Caco-2 (cell line): ENCODE measurements at regions of chr15 and their contacts with region 1.

Region 1: GRCh38 chr15:40906091-40906990 is 12.1 kb downstream of the VPS18 start:
- DNase-seq: peak; percentile 88 to 92
- H3K4me3 ChIP-seq: peak overlapping the region; percentile 16; the same call in 1 of the 2 replicates
- H3K4me3 Mint-ChIP-seq: no peak overlapping the region
- H3K27ac Mint-ChIP-seq: peak overlapping the region; percentile 35
- H3K4me1 ChIP-seq: peaks cover 28% of the 10 kb centered on the region
- H3K4me1 Mint-ChIP-seq: peaks cover 12% of the 10 kb centered on the region
- H3K27me3 ChIP-seq: no peaks in the 10 kb centered on the region
- H3K27me3 Mint-ChIP-seq: no peaks in the 10 kb centered on the region
- CTCF ChIP-seq: peak; percentile 86 to 89

Region 2: DNA sequence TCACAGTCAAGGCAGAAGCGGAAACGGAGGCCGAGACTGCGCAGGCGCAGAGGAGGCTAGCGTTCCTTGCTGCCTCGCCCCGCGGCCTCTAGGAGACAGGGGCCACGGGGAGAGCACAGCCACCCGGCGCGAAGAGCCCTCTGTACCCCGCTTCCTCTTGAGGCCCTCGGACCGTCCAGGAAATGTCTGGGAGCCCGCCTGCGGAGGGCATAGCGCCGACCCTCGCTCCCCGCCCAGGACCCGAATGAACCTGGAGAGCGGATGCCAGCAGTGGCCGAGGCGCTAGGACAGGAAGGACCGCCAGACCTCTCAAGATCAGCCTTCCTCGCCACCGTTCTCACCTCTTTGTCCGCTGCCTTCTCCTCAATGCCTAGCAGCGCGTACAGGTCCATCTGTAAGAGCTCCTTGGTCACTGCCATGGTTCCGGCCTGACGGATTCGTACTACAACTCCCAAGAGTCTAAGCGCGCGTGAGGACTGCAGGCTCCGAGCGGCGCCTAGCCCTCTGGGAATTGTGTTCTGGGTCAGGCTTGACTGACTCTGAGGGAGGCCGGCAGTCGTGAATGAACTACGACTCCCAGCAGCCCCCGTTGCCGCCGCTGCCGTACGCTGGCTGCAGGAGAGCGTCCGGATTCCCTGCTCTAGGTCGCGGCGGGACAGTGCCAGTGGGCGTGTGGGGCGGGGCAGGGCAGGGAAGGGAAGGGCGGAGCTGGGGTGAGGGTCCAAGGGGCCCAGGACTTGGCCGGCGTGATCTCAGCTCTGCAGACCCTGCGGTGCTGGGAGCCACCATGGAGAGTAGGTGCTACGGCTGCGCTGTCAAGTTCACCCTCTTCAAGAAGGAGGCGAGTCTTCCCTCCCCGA is 99.1 kb before region 1 on chr15 and contains the starts of genes DNAJC17 and ZFYVE19:
- CTCF ChIA-PET with region 1: no interaction called
- POLR2A ChIA-PET with region 1: no interaction called
- intact Hi-C with region 1: no loop called
- DNase-seq: peak; percentile 96 to 97
- H3K4me3 ChIP-seq: peak within 1 kb of the TSS; percentile 88
- H3K4me3 Mint-ChIP-seq: peak within 1 kb of the TSS; percentile 95
- H3K27ac Mint-ChIP-seq: peak within 1 kb of the TSS; percentile 94
- H3K4me1 ChIP-seq: 0 out of 2 replicates have a peak, but pooled peaks cover 4% of the 10 kb centered on the region
- H3K4me1 Mint-ChIP-seq: no peaks in the 10 kb centered on the region
- H3K27me3 ChIP-seq: no peaks in the 10 kb centered on the region
- H3K27me3 Mint-ChIP-seq: no peaks in the 10 kb centered on the region
- CTCF ChIP-seq: no peak
- total RNA-seq, gene DNAJC17: 26.3 and 30.1 TPM in 2 replicates
- total RNA-seq, gene ZFYVE19: 26.7 and 26.9 TPM in 2 replicates

Region 3: DNA sequence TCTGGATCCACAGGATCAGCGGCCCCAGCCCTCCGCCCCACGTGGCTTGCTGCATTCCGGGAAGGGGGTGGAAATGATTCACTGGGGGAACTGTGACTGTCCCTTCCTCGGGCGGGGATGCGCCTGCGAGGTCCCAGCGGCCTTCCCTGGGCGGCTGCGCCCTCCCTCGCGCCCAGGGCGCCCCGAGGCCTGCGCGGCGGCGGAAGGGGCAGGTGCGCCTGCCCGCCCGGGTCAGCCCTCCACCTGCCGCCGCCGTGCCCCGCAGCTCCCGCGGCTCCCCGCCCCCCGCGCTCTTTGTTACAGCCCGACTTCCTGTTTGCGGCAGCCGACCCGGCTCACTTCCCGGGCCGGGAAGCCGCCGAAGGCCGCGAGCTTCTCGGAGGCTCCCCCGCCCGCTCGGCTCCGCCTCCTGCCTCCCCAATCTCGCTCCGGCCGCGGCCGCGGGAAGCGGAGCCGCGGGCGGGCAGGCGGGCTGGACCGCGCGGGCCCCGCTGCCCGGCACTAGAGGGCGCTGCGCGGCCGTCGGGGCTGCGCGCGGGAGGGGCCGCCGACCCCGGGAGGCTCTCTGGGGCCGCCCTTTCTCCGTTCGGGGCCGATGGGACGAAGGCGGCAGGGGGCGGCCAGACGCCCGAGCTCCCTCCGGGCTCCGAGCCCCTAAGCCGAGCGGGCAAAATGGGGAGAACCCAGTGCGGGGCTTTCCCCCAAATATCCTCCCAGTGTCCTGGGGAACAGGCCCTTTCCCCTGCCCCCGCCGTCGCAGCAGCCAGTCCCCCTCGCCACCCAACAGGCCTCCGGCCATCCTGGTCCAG is 35.4 kb after region 1 on chr15:
- CTCF ChIA-PET with region 1: interaction called, 12 read pairs
- POLR2A ChIA-PET with region 1: interaction called, 3 read pairs
- intact Hi-C with region 1: loop called (anchors 5 kb)
- DNase-seq: peak; percentile 86 to 90
- H3K4me3 ChIP-seq: peak overlapping the region; percentile 56
- H3K4me3 Mint-ChIP-seq: peak overlapping the region; percentile 79
- H3K27ac Mint-ChIP-seq: peak overlapping the region; percentile 95
- H3K4me1 ChIP-seq: peaks cover 12% of the 10 kb centered on the region
- H3K4me1 Mint-ChIP-seq: no peaks in the 10 kb centered on the region
- H3K27me3 ChIP-seq: no peaks in the 10 kb centered on the region
- H3K27me3 Mint-ChIP-seq: no peaks in the 10 kb centered on the region
- CTCF ChIP-seq: peak; percentile 16 to 60

Region 4: DNA sequence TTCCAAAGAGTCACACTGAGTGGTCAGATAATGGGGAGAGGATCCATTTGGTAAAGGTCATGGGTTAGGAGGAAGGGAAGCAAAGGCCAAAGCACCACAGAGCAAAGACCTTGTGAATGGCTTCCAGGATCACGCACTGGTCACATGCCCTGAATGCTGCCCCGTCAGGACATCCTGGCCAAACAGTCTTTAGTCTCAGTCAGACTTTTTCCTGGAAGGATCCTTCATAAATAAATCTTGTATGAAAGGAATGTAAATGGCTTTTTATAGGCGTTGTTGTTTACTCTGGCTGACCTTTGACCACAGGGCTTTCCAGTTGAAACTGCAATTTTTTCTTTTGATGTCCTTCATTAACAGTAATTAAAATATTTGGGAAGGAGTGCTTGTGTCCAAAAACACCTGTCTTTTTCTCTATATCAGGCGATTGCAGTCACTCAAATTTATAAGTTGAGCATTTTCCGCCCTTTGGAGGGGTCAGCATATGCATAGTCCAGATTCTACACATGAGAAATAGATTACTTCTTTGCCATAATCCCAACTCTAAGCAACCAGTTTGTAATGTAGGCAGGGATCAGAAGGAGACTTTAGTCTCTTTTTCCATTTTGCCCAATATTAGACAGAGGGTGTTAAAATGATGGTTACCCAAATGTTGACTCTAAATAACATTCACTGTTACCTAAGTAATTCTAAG is 95.3 kb after region 1 on chr15:
- CTCF ChIA-PET with region 1: no interaction called
- POLR2A ChIA-PET with region 1: no interaction called
- intact Hi-C with region 1: no loop called
- DNase-seq: peak; percentile 58 to 67
- H3K4me3 ChIP-seq: no peak overlapping the region
- H3K4me3 Mint-ChIP-seq: no peak overlapping the region
- H3K27ac Mint-ChIP-seq: peak overlapping the region; percentile 3
- H3K4me1 ChIP-seq: peaks cover 25% of the 10 kb centered on the region
- H3K4me1 Mint-ChIP-seq: no peaks in the 10 kb centered on the region
- H3K27me3 ChIP-seq: no peaks in the 10 kb centered on the region
- H3K27me3 Mint-ChIP-seq: no peaks in the 10 kb centered on the region
- CTCF ChIP-seq: no peak

Region 5: DNA sequence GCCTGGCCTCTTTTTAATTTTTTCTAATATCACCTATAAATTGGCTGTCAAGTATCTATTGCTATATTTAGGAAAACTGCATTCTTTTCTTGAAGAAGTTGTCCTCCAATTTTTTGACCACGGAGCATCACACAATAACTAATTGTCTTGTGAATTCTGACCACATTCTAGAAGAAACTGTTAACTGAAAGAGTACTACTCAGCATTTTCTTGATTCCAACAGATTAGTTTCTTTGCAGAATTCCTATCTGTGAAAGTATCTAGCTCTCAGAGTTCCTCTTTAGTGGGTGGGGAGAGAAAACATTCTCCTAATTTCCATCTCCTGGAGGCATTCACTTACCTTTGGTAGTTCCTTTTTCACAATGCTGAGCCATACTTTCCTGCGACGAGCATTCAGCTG is 178.7 kb after region 1 on chr15:
- CTCF ChIA-PET with region 1: no interaction called
- POLR2A ChIA-PET with region 1: no interaction called
- intact Hi-C with region 1: no loop called
- DNase-seq: no peak
- H3K4me3 ChIP-seq: no peak overlapping the region
- H3K4me3 Mint-ChIP-seq: no peak overlapping the region
- H3K27ac Mint-ChIP-seq: no peak overlapping the region
- H3K4me1 ChIP-seq: no peaks in the 10 kb centered on the region
- H3K4me1 Mint-ChIP-seq: no peaks in the 10 kb centered on the region
- H3K27me3 ChIP-seq: no peaks in the 10 kb centered on the region
- H3K27me3 Mint-ChIP-seq: no peaks in the 10 kb centered on the region
- CTCF ChIP-seq: no peak

Region 6: DNA sequence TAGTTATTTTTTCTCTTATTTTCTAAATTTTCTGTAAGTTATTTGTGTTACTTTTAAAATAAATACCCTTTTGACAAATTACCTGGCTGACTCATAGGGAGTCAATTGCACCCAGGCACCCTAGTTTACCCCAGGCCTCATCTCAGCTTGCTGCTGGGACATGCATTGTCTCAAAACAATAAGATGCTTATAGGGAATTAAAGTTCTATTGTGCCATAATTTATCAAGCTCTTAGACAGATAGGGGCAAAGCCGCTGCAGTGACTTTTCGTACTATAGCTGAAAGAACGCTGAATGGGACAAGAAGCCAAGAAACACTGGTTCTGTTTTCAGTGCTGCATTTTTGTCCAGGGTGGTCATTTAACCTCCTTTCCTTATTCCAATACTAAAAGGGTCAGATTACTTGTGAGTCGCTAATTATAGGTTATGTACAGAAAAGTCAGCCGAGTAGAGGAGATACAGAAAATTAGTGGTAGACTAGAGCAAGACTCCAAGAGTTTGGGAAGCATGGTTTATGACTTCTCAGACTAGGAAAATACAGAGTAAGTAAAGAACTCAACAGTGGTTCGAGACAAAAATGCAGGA is 274.0 kb after region 1 on chr15:
- CTCF ChIA-PET with region 1: interaction called, 5 read pairs
- POLR2A ChIA-PET with region 1: no interaction called
- intact Hi-C with region 1: loop called (anchors 1 kb)
- DNase-seq: no peak
- H3K4me3 ChIP-seq: no peak overlapping the region
- H3K4me3 Mint-ChIP-seq: no peak overlapping the region
- H3K27ac Mint-ChIP-seq: no peak overlapping the region
- H3K4me1 ChIP-seq: no peaks in the 10 kb centered on the region
- H3K4me1 Mint-ChIP-seq: no peaks in the 10 kb centered on the region
- H3K27me3 ChIP-seq: no peaks in the 10 kb centered on the region
- H3K27me3 Mint-ChIP-seq: no peaks in the 10 kb centered on the region
- CTCF ChIP-seq: no peak

Region 7: DNA sequence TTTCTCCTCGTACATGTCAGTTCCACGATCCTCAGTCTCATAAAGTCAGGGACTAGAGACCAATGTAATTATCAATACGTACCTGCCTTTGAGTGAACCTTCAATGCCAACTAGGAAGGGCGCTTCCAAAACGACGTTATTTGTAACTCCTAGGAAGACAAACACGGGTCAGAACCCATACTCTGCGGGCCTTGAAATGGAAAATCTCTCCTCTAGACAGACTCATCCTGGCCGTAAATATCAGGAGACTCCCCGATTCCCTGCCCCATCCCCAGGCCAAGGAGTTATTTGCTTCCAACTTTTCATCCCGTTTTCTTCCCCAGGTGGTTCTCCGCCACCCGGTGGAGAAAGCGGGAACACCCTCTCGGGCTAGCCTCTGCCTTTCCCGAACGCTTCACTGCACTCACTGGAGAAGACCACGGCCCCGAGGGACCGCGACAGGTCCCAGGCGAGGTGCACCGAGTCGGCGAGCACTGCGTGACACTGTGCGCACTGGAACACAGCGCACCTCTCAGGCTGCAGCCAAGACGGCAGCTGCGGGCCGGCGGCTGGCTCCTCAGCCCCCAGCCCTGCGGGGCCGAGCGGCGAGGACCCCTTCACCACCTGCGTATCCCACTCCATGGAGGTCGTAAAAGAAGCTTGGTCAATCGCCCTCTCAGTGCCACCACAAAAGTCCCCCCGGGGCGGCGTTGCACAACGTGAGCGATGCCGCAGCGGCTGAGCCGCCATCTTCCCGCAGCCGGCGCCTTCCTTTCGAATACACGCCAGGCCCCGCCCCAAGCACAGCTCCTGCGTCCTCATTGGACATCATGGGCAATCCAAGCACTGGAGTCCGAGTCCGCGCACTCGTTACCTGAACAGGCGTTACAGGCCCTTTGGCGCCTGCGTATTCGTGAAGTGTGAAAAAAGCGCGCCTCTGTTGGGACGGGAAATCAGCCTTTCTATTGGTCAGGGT is 425.8 kb after region 1 on chr15 and contains the start of gene OIP5:
- CTCF ChIA-PET with region 1: interaction called, 4 read pairs
- POLR2A ChIA-PET with region 1: no interaction called
- intact Hi-C with region 1: loop called (anchors 10 kb)
- DNase-seq: peak; percentile 98 to 99
- H3K4me3 ChIP-seq: peak within 1 kb of the TSS; percentile 87
- H3K4me3 Mint-ChIP-seq: peak within 1 kb of the TSS; percentile 89
- H3K27ac Mint-ChIP-seq: peak within 1 kb of the TSS; percentile 97
- H3K4me1 ChIP-seq: peaks cover 4% of the 10 kb centered on the region; the same call in 1 of the 2 replicates
- H3K4me1 Mint-ChIP-seq: peaks cover 9% of the 10 kb centered on the region
- H3K27me3 ChIP-seq: no peaks in the 10 kb centered on the region
- H3K27me3 Mint-ChIP-seq: no peaks in the 10 kb centered on the region
- CTCF ChIP-seq: peak; percentile 63 to 82
- total RNA-seq, gene OIP5: 23.4 and 26.4 TPM in 2 replicates